Caco-2 (cell line): ENCODE measurements at regions of chr10 and their contacts with region 1.

Region 1: DNA sequence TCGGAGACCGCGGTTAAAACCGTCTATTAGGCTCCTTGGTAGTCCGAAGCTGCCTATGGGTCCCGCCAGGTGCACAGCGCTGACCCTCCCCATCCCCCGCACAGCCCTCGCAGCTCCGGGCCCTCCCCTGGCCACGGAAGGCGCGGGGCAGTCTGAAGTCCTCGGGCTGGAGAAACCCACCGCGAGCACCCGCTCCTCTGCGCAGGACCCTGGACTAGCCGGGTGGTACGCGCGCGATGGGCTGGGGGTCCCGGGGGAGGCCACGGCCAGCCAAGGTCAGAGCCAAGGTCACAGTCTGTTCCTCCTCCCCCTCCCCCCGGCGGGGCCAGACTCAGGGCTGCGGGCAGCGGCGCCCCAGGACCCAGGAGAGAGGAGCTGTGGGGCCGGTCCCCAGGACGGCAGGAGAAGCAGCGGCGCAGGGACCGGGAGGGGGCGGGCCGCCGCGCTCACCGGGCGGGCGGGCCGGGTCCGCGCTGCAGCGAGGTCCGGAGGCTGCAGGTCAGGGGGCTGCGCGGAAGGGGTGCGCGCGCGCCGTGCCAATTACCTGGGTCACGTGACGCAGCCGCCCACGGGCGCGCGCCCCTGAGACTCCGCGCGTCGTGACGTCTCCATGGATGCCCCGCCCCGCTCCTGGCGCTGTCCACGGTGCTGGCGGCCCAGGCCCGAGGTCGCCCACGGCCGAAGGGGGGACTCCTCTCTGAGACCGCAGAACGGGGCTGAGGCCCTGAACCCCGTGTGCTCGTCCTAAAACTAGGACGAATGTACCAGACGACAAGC is at the start of gene OGDHL:
- DNase-seq: peak; percentile 90 to 96
- H3K4me3 ChIP-seq: peak within 1 kb of the TSS; percentile 84
- H3K4me3 Mint-ChIP-seq: peak within 1 kb of the TSS; percentile 75
- H3K27ac Mint-ChIP-seq: no peak within 1 kb of the TSS
- H3K4me1 ChIP-seq: 0 out of 2 replicates have a peak, but pooled peaks cover 7% of the 10 kb centered on the region
- H3K4me1 Mint-ChIP-seq: peaks cover 8% of the 10 kb centered on the region
- H3K27me3 ChIP-seq: no peaks in the 10 kb centered on the region
- H3K27me3 Mint-ChIP-seq: peaks cover 3% of the 10 kb centered on the region
- CTCF ChIP-seq: no peak
- total RNA-seq, gene OGDHL: 21.4 and 23.9 TPM in 2 replicates

Region 2: DNA sequence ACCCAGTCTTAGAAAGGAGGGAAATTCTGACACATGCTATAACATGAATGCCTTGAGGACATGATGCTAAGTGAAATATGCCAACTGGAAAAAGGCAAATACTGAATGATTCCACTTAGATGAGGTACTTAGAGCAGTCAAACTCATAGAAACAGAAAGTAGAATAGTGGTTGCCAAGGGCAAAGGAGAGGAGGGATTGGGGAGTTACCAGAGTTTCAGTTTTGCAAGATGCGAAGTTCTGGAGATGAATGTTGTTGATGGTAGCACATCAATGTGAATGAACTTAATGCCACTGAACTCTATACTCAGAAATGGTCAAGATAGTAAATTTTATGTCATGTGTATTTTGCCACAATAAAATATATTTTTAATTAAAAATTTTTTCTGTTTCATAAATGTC is 405.0 kb before region 1 on chr10:
- CTCF ChIA-PET with region 1: no interaction called
- POLR2A ChIA-PET with region 1: no interaction called
- intact Hi-C with region 1: no loop called
- DNase-seq: no peak
- H3K4me3 ChIP-seq: no peak overlapping the region
- H3K4me3 Mint-ChIP-seq: no peak overlapping the region
- H3K27ac Mint-ChIP-seq: no peak overlapping the region
- H3K4me1 ChIP-seq: no peaks in the 10 kb centered on the region
- H3K4me1 Mint-ChIP-seq: no peaks in the 10 kb centered on the region
- H3K27me3 ChIP-seq: no peaks in the 10 kb centered on the region
- H3K27me3 Mint-ChIP-seq: peaks cover 9% of the 10 kb centered on the region
- CTCF ChIP-seq: no peak

Region 3: DNA sequence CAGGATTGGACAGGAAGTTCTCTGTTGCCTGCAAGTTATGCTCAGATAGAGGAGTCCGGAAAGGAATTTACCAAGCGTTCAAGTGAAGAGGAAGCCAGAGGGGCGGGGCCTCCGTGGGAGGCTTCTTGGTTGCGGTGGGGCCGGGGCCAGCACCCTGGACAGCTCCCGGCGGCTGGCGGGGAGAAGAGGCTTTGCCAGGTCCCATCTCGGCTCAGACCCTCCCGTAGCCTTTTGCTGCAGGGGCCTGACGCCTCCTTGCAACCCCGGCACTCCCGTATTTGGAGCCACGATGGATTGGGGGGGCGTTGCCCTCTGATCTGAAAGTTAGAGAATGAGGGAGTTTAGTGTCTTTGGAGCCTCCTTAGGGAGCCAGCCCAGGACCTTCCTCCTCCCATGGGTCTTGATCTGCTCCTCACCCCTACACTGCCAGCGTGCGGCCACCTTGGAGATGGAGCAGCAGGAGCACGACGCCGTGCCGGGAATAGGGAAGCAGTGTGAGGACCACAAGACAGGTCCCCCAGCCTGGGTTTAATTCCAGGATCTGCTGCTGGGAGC is 154.9 kb before region 1 on chr10:
- CTCF ChIA-PET with region 1: no interaction called
- POLR2A ChIA-PET with region 1: no interaction called
- intact Hi-C with region 1: loop called (anchors 1 kb)
- DNase-seq: peak; percentile 84 to 93
- H3K4me3 ChIP-seq: no peak overlapping the region
- H3K4me3 Mint-ChIP-seq: no peak overlapping the region
- H3K27ac Mint-ChIP-seq: no peak overlapping the region
- H3K4me1 ChIP-seq: peaks cover 5% of the 10 kb centered on the region
- H3K4me1 Mint-ChIP-seq: peaks cover 6% of the 10 kb centered on the region
- H3K27me3 ChIP-seq: no peaks in the 10 kb centered on the region
- H3K27me3 Mint-ChIP-seq: peaks cover 7% of the 10 kb centered on the region
- CTCF ChIP-seq: no peak

Region 4: DNA sequence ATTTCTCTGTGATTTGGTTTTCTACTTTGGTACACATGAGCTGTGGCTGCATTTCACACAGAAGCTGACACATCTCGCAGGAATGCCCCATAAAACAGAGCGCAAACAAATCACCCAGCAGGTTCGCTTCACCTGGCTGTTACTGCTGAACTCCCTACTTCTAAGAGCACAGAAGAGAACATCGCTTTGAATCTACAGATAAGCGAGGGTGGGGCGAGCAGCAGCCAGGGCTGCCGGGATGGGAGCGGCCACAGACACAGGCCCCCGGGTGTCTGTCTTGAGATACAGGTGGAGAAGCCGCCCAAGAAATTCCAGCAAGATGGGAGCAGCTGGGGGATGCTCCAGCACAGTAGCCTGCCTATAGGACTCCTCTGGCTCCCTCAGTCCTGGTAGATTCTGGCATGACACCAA is 27.3 kb before region 1 on chr10:
- CTCF ChIA-PET with region 1: no interaction called
- POLR2A ChIA-PET with region 1: interaction called, 3 read pairs
- intact Hi-C with region 1: loop called (anchors 2 kb)
- DNase-seq: peak; percentile 87 to 92
- H3K4me3 ChIP-seq: no peak overlapping the region
- H3K4me3 Mint-ChIP-seq: peak overlapping the region; percentile 20
- H3K27ac Mint-ChIP-seq: peak overlapping the region; percentile 79
- H3K4me1 ChIP-seq: peaks cover 23% of the 10 kb centered on the region
- H3K4me1 Mint-ChIP-seq: peaks cover 30% of the 10 kb centered on the region
- H3K27me3 ChIP-seq: no peaks in the 10 kb centered on the region
- H3K27me3 Mint-ChIP-seq: no peaks in the 10 kb centered on the region
- CTCF ChIP-seq: no peak

Region 5: GRCh38 chr10:49837061-49837478 is 75.1 kb after region 1 on chr10:
- CTCF ChIA-PET with region 1: no interaction called
- POLR2A ChIA-PET with region 1: no interaction called
- intact Hi-C with region 1: loop called (anchors 2 kb)
- DNase-seq: peak; percentile 76 to 84
- H3K4me3 ChIP-seq: no peak overlapping the region
- H3K4me3 Mint-ChIP-seq: peak overlapping the region; percentile 62
- H3K27ac Mint-ChIP-seq: peak overlapping the region; percentile 87
- H3K4me1 ChIP-seq: peaks cover 36% of the 10 kb centered on the region
- H3K4me1 Mint-ChIP-seq: peaks cover 26% of the 10 kb centered on the region
- H3K27me3 ChIP-seq: no peaks in the 10 kb centered on the region
- H3K27me3 Mint-ChIP-seq: no peaks in the 10 kb centered on the region
- CTCF ChIP-seq: peak in 1 of 2 experiments; percentile 4